ENCODE measurements at regions of chr14 and their contacts with region 1.

Region 1: GRCh38 chr14:102516531-102517415 is 7.2 kb upstream of the ANKRD9 start:
- DNase-seq: peak; percentile 68 to 84
- H3K4me3 ChIP-seq: peak overlapping the region; percentile 63 to 83 (median 72)
- H3K27ac ChIP-seq: peak overlapping the region; percentile 28 to 82 (median 74)
- H3K4me1 ChIP-seq: peaks cover 0 to 14% (median 11%) of the 10 kb centered on the region in 4 donors
- H3K27me3 ChIP-seq: no peaks in the 10 kb centered on the region
- CTCF ChIP-seq: peak in 5 of 7 experiments; percentile 32 to 100 (median 88)
- EP300 ChIP-seq: no peak
- POLR2A ChIP-seq: no peak

Region 2: DNA sequence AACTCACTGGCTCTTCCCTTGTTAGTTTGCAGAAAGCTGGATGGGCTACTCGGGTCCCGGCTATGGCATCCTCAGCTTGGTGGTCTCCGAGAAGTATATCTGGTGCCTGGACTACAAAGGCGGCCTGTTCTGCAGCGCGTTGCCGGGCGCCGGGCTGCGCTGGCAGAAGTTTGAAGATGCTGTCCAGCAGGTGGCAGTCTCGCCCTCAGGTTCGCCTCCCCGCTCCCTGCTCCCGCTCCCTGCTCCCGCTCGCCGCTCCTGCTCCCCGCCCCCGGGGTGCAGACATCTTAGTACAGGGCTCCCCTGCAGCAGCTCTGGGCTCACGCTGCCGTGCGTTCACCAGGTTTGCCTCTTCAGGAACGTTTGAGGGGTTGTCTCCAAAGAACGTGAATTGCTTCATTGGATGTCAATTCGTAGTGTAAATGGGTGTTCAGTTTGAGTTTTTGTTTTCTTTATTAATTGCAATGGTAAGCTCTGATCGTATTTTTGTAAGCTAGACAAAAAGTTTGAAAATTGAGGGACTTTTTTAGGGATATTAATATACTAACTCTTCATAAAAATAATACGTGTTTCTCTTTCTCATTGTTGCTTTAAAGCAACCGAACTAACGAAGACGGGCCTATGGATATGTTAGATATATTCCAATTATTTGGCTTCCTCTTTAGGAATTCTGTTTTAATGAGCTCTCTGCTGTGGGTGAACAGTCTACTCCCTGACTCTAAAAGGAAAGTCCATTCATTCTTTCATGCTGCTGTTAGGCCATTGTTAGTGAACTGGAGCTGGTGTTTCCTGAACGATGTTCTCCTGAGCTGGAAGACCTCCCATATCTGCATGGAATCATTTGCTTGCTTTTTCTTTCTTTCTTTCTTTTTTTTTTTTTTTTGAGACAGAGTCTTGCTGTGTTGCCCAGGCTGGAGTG is 78.5 kb before region 1 on chr14:
- intact Hi-C with region 1: loop called (anchors 5 kb)
- DNase-seq: peak; percentile 89 to 96
- H3K4me3 ChIP-seq: peak overlapping the region; percentile 4 to 39 (median 16)
- H3K27ac ChIP-seq: no peak overlapping the region
- H3K4me1 ChIP-seq: peaks cover 4 to 11% (median 9%) of the 10 kb centered on the region in 4 donors
- H3K27me3 ChIP-seq: no peaks in the 10 kb centered on the region
- CTCF ChIP-seq: peak in 5 of 7 experiments; percentile 49 to 80 (median 71)
- EP300 ChIP-seq: no peak
- POLR2A ChIP-seq: no peak

Region 3: GRCh38 chr14:102461490-102462338 is 55.1 kb before region 1 on chr14:
- intact Hi-C with region 1: no loop called
- DNase-seq: no peak
- H3K4me3 ChIP-seq: no peak overlapping the region
- H3K27ac ChIP-seq: no peak overlapping the region
- H3K4me1 ChIP-seq: peaks cover 0 to 7% (median 3%) of the 10 kb centered on the region in 4 donors
- H3K27me3 ChIP-seq: no peaks in the 10 kb centered on the region
- CTCF ChIP-seq: no peak
- EP300 ChIP-seq: no peak
- POLR2A ChIP-seq: no peak

Region 4: DNA sequence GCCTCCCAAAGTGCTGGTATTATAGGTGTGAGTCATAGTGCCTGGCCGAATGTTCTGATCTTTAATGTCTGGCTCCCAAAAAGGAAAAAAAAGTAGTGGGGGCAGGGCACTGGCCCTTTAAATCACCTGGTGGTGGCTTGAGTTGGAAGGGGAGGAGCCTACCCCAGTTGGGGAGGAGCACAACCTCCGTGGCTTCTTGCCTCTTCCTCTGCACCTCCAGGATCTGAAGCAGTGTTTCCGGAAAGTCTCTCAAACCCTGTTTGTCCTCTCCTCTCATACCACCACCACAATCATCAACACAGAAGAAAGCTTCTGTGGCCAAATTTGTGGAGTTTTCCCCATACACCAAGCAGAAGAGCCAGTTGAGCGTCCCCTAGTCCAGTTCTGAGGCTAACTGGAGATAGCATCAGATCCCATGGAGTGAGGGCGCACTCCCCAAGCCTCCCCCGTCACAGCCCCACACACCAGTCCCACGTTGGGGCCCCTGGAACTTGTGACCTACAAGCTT is 51.4 kb after region 1 on chr14:
- intact Hi-C with region 1: no loop called
- DNase-seq: peak; percentile 57 to 69
- H3K4me3 ChIP-seq: no peak overlapping the region
- H3K27ac ChIP-seq: peak overlapping the region in 1 of 5 donors; percentile 39
- H3K4me1 ChIP-seq: peaks cover 0 to 14% (median 4%) of the 10 kb centered on the region in 4 donors
- H3K27me3 ChIP-seq: no peaks in the 10 kb centered on the region
- CTCF ChIP-seq: no peak
- EP300 ChIP-seq: no peak
- POLR2A ChIP-seq: no peak